ENCODE measurements at regions of chr7 and their contacts with region 1.

Region 1: DNA sequence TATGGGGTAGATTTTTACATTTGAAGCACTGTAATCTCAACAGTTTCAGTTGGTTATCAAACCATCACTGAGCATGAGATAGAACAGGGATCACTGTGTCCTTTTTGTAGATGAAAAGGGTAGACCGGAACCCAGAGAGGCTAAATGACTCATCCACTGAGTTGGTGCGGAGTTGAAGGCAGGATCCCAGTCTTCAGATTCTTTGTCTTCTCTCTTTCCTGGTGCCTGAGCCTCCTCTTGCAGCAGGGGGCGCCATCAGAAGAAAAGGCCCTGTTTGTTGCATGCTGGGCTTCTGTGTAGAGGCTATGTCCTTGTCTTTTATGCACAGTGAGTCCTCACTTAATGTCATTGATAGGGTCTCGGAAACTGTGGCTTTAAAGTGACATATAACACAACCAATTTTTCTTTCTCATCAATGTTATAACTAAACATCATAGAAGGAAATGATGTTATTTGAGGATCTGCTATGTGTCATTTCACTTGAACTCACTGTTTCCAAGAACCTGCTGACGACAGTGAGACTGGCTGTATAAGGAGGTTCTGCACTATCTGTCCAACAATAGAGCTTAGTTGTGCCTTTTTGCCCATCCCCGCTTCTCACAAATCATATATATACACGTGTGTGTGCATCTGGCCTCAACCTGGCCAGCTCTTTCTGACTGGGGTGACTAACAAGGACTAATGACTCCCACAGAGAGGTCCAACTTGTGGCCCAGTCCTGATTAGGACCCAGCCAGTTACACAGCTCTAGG is 14.3 kb downstream of the ZNF282 start:
- DNase-seq: peak; percentile 70
- H3K4me3 Mint-ChIP-seq: peak overlapping the region; percentile 32
- H3K27ac Mint-ChIP-seq: peak overlapping the region; percentile 94
- H3K4me1 Mint-ChIP-seq: peaks cover 31% of the 10 kb centered on the region
- H3K27me3 Mint-ChIP-seq: no peaks in the 10 kb centered on the region

Region 2: GRCh38 chr7:149195180-149196150 is 14.2 kb before region 1 on chr7 and contains the start of gene ZNF282:
- intact Hi-C with region 1: loop called (anchors 2 kb)
- DNase-seq: peak; percentile 76
- H3K4me3 Mint-ChIP-seq: peak within 1 kb of the TSS; percentile 89
- H3K27ac Mint-ChIP-seq: peak within 1 kb of the TSS; percentile 88
- H3K4me1 Mint-ChIP-seq: peaks cover 41% of the 10 kb centered on the region
- H3K27me3 Mint-ChIP-seq: no peaks in the 10 kb centered on the region
- total RNA-seq, gene ZNF282: 116 and 118 TPM in 2 replicates

Region 3: DNA sequence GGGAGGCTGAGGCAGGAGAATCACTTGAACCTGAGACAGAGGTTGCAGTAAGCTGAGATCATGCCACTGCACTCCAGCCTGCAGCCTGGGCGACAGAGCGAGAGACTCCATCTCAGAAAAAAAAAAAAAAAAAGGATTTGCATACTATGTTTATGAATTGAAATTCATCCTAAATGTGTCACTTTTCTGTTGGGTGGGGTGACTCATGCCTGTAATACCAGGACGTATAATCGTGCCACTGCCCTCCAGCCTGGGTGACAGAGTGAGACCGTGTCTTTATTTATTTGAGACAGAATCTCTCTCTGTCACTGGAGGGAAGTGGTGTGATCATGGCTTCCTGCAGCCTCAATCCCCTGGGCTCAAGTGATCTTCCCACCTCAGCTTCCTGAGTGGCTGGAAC is 35.5 kb after region 1 on chr7:
- intact Hi-C with region 1: loop called (anchors 1 kb)
- DNase-seq: no peak
- H3K4me3 Mint-ChIP-seq: peak overlapping the region; percentile 3
- H3K27ac Mint-ChIP-seq: peak overlapping the region; percentile 81
- H3K4me1 Mint-ChIP-seq: peaks cover 46% of the 10 kb centered on the region
- H3K27me3 Mint-ChIP-seq: no peaks in the 10 kb centered on the region

Measured in activated T-helper 2 cell treated with anti-CD3 and anti-CD28 coated beads, Interferon-gamma antibody, Interleukin-2, Interleukin-4, amounts not matched to agents 10 μg/mL and 5 μg/mL and 100 μg/mL, durations not matched to agents 14 hours and 24 hours and 36 hours (primary cell).